Activated T-helper 2 cell treated with anti-CD3 and anti-CD28 coated beads, Interferon-gamma antibody, Interleukin-2, Interleukin-4, amounts not matched to agents 10 μg/mL and 5 μg/mL and 100 μg/mL, durations not matched to agents 14 hours and 24 hours and 36 hours (primary cell): ENCODE measurements at regions of chr19 and their contacts with region 1.

Region 1: GRCh38 chr19:3176603-3177501 is 1.7 kb upstream of the S1PR4 start:
- DNase-seq: peak; percentile 68
- H3K4me3 Mint-ChIP-seq: peak overlapping the region; percentile 83
- H3K27ac Mint-ChIP-seq: peak overlapping the region; percentile 91
- H3K4me1 Mint-ChIP-seq: peaks cover 15% of the 10 kb centered on the region
- H3K27me3 Mint-ChIP-seq: no peaks in the 10 kb centered on the region

Region 2: GRCh38 chr19:3142292-3142670 is 34.6 kb before region 1 on chr19:
- intact Hi-C with region 1: no loop called
- DNase-seq: no peak
- H3K4me3 Mint-ChIP-seq: peak overlapping the region; percentile 18
- H3K27ac Mint-ChIP-seq: peak overlapping the region; percentile 76
- H3K4me1 Mint-ChIP-seq: peaks cover 35% of the 10 kb centered on the region
- H3K27me3 Mint-ChIP-seq: no peaks in the 10 kb centered on the region

Region 3: DNA sequence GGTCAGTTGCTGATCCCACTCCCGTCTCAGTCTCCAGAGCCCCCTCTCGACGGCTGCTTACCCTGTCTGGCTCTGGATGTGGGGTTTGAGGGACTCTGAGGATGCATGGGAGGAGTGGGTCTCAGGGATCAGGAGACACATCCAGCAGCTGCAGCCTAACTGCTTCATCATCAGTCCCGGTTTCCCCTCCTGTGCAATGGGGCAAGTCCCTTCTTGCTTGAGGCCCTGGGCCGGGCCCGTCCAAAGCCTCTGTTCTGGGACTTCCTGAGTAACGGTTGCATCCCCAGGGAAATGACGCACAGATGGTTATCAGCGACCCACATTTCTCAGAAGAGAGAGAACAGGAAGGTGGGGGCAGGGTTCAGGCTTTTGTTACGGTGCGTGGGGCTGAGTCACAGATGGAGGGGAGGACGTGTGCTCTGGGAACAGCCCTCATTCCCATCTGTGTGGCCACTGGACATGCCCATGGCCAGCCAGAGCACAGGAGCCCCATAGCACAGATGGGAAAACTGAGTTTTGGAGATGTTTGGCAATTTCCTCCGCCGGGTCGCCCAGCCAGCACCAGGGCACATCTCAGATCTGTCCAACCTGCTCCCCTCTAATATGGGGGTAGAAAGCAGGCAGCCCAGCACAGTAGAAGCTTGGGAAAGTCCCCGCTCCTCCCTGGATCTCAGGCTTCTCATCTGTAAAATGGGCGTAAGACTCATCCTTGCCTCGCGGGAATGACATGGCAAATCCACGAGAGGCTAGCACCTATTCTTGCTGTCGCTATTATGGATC is 21.7 kb before region 1 on chr19:
- intact Hi-C with region 1: loop called (anchors 2 kb)
- DNase-seq: peak; percentile 79
- H3K4me3 Mint-ChIP-seq: no peak overlapping the region
- H3K27ac Mint-ChIP-seq: no peak overlapping the region
- H3K4me1 Mint-ChIP-seq: peaks cover 9% of the 10 kb centered on the region
- H3K27me3 Mint-ChIP-seq: no peaks in the 10 kb centered on the region

Region 4: DNA sequence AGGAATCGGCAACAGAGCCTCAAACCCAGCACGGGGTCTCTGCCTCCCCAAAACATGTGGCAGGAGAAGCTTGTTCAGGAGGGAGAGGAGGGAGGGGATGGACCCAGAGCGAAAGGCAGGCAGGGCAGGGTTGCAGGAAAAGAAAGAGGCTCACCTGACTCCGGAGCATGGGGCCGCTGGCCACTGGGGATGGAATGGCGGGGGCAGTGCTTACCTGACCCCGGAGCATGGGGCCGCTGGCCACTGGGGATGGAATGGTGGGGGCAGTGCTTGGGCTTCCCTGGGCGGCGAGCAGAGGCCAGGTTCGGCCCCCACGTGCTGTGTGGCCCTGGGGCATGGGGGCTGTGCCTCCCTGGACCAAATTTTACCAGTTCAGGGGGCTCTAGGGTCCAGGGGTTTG is 34.3 kb after region 1 on chr19:
- intact Hi-C with region 1: no loop called
- DNase-seq: no peak
- H3K4me3 Mint-ChIP-seq: no peak overlapping the region
- H3K27ac Mint-ChIP-seq: no peak overlapping the region
- H3K4me1 Mint-ChIP-seq: no peaks in the 10 kb centered on the region
- H3K27me3 Mint-ChIP-seq: no peaks in the 10 kb centered on the region